Panc1 (cell line): ENCODE measurements at regions of chr22 and their contacts with region 1.

Region 1: DNA sequence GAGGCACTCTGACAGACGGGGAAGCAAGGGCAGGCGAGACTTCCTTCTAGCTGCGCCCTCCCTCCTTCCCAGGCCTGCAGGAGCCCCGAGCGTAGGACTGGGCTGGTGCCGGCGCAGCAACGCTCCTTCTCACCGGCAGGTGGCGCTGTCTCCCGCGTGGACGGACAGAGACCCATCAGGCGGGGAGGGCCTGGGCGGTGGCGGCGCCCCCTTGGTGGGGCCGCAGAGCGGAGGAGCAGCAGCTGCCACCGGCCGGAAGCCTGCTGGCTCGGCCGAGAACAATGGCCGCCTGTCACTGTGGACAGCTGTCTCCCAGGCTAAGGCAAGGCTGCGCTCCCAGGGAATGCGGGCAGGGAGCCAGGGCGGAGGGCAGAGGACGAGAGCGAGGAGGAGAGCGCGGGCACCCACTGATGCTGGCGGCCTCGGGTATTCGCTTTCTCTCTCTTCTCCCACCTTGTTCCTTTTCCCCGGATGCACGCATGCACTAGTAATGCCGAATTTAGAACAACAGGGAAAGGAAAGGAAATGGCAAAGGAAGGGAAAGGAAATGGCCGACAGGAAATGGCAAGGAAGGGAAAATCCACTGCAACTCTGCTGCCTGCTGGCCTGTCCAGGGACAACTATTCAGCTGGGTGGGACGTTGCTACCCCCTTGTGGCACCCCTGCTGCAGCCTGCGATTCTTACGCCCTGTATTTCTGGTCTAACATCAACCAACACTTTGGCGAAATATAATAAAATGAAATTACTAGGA is 14.4 kb downstream of the PPM1F start:
- DNase-seq: no peak
- ATAC-seq: peak; percentile 97
- H3K4me3 ChIP-seq: peak overlapping the region; percentile 53 to 66
- H3K27ac ChIP-seq: peak overlapping the region; percentile 91
- H3K4me1 ChIP-seq: peaks cover 13% of the 10 kb centered on the region
- H3K27me3 ChIP-seq: no peaks in the 10 kb centered on the region
- CTCF ChIP-seq: peak; percentile 96

Region 2: GRCh38 chr22:21712894-21713712 is 225.1 kb before region 1 on chr22:
- CTCF ChIA-PET with region 1: no interaction called
- POLR2A ChIA-PET with region 1: no interaction called
- in situ Hi-C with region 1: no loop called
- intact Hi-C with region 1: loop called (anchors 5 kb)
- DNase-seq: peak; percentile 51
- ATAC-seq: peak; percentile 93
- H3K4me3 ChIP-seq: peak overlapping the region in 1 of 2 experiments; percentile 12; a peak in 1 of 4 replicates
- H3K27ac ChIP-seq: no peak overlapping the region
- H3K4me1 ChIP-seq: no peaks in the 10 kb centered on the region
- H3K27me3 ChIP-seq: no peaks in the 10 kb centered on the region
- CTCF ChIP-seq: peak; percentile 83

Region 3: DNA sequence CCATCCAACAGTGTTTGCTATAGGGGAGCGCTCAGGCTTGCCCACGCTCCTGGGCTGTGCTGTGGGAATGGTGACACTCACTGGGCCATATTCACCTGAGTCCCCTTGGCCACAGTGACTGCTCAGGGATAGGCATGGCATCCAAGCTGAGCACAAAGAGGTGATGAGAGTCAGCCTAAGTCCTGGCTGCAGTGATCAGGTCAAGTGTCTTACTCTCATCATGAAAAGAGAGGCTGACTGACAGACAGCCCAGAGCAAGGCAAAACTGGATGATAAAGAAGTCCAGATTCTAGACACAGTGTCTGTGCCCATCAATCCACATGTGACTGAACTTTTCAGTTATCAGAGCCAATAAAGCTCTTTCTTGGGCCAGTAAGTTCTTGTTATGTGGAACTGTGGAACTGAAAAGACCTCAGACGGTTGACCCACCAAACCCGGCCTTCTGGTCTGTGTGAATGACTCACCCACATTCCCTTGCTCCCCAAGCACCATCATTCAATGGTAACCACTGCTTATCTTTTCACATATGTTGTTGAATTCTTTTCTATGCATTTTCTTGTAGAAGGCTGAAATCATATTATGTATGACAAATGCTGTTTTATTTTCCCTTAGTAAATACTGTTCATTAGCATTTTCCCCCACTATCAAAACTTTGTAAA is 159.4 kb before region 1 on chr22:
- CTCF ChIA-PET with region 1: no interaction called
- POLR2A ChIA-PET with region 1: no interaction called
- in situ Hi-C with region 1: no loop called
- intact Hi-C with region 1: no loop called
- DNase-seq: no peak
- ATAC-seq: no peak
- H3K4me3 ChIP-seq: no peak overlapping the region
- H3K27ac ChIP-seq: no peak overlapping the region
- H3K4me1 ChIP-seq: no peaks in the 10 kb centered on the region
- H3K27me3 ChIP-seq: no peaks in the 10 kb centered on the region
- CTCF ChIP-seq: no peak

Region 4: DNA sequence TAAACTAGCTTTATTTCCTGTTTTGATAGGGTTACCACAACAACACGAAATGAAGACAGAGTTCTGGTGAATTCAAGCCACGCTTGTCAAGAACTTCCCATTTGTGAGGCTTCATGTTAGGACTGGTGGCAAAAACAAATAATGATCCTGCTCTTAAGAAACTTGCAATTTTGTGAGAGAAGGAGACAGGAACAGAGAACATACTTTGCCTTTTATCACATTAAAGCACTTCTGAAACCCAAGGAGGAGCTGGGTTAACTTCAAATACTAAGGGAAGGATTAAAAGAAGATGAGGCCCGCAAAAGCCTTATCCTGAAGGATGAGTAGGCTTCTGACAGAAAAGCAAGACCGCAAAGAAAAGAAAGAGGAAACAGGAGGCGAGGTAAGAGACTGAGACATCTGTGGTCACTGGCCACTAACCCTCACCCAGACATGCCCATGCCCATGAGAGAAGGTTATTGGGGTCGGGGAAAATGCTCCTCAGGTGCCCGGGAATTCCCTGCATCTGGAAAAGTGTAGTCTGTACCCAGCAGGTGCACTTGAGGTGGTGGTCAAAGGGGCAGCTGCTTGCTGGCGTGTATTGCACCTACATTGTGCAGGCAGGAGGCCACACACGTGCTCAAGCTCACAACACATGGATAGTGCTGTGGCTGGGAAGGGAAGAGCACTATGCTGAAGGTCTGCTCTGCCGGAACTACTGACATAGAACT is 121.3 kb before region 1 on chr22:
- CTCF ChIA-PET with region 1: no interaction called
- POLR2A ChIA-PET with region 1: no interaction called
- in situ Hi-C with region 1: loop called (anchors 25 kb)
- intact Hi-C with region 1: no loop called
- DNase-seq: peak; percentile 32
- ATAC-seq: peak; percentile 63; the same call in 1 of the 2 replicates
- H3K4me3 ChIP-seq: no peak overlapping the region
- H3K27ac ChIP-seq: no peak overlapping the region
- H3K4me1 ChIP-seq: peaks cover 6% of the 10 kb centered on the region
- H3K27me3 ChIP-seq: no peaks in the 10 kb centered on the region
- CTCF ChIP-seq: no peak

Region 5: GRCh38 chr22:21984793-21985613 is 46.8 kb after region 1 on chr22:
- CTCF ChIA-PET with region 1: no interaction called
- POLR2A ChIA-PET with region 1: no interaction called
- in situ Hi-C with region 1: no loop called
- intact Hi-C with region 1: no loop called
- DNase-seq: no peak
- ATAC-seq: peak; percentile 76
- H3K4me3 ChIP-seq: no peak overlapping the region
- H3K27ac ChIP-seq: no peak overlapping the region
- H3K4me1 ChIP-seq: peaks cover 2% of the 10 kb centered on the region; the same call in 1 of the 2 replicates
- H3K27me3 ChIP-seq: no peaks in the 10 kb centered on the region
- CTCF ChIP-seq: no peak; the same call in 1 of the 2 replicates